Mammary epithelial cell (primary cell): ENCODE measurements at regions of chr7 and their contacts with region 1.

Region 1: DNA sequence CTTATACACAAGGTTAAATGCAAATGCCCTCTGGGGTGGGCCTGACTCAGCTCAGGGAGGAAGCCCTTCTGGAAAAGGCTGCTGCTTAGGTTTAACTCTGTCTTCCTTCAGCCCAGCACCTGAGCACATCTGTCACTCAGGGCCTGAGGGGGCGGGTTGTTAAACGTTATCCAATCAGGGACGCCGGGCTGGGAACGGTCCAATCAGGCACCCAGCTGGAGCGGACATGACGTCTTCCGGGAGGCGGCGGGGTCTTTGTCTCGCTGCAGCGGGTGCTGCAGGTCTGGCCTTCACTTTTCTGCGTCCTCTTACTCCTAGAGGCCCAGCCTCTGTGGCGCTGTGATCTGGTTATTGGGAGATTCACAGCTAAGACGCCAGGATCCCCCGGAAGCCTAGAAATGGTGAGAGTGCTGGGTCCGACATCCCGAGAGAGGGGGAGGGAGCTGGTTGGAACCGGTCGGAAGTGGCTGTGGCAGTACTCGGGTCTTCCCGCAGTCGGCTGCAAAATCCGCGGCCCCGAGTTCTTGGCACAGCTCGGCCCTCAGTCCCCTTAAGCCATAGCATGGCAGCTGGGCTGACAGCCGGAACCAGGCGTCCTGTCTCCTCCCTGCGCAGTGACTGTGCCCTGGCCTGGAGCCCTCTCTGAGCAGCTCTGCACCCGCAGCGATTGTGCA is at the start of gene ZNF138:
- DNase-seq: peak; percentile 92
- H3K4me3 ChIP-seq: peak within 1 kb of the TSS; percentile 87 to 99 (median 92)
- H3K27ac ChIP-seq: peak within 1 kb of the TSS; percentile 67
- H3K4me1 ChIP-seq: peaks cover 3% of the 10 kb centered on the region
- H3K27me3 ChIP-seq: no peaks in the 10 kb centered on the region
- CTCF ChIP-seq: no peak
- total RNA-seq, gene ZNF138: 3.6 to 8.7 TPM

Region 2: GRCh38 chr7:64650971-64651781 is 143.1 kb before region 1 on chr7:
- CTCF ChIA-PET with region 1: no interaction called
- dilution Hi-C with region 1: no loop called
- in situ Hi-C with region 1: no loop called
- intact Hi-C with region 1: loop called (anchors 10 kb)
- DNase-seq: peak; percentile 48
- H3K4me3 ChIP-seq: no peak overlapping the region
- H3K27ac ChIP-seq: no peak overlapping the region
- H3K4me1 ChIP-seq: no peaks in the 10 kb centered on the region
- H3K27me3 ChIP-seq: no peaks in the 10 kb centered on the region
- CTCF ChIP-seq: no peak